Calu3 (cell line): ENCODE measurements at regions of chr1 and their contacts with region 1.

Region 1: GRCh38 chr1:25837262-25837875 is 17.6 kb downstream of the MTFR1L start:
- DNase-seq: no peak
- H3K4me3 Mint-ChIP-seq: no peak overlapping the region
- H3K27ac Mint-ChIP-seq: no peak overlapping the region
- H3K4me1 Mint-ChIP-seq: no peaks in the 10 kb centered on the region
- H3K27me3 Mint-ChIP-seq: no peaks in the 10 kb centered on the region
- CTCF ChIP-seq: no peak

Region 2: GRCh38 chr1:25704267-25704691 is 133.1 kb before region 1 on chr1:
- CTCF ChIA-PET with region 1: no interaction called
- intact Hi-C with region 1: no loop called
- DNase-seq: no peak
- H3K4me3 Mint-ChIP-seq: no peak overlapping the region
- H3K27ac Mint-ChIP-seq: no peak overlapping the region
- H3K4me1 Mint-ChIP-seq: no peaks in the 10 kb centered on the region
- H3K27me3 Mint-ChIP-seq: peaks cover 45% of the 10 kb centered on the region
- CTCF ChIP-seq: no peak

Region 3: DNA sequence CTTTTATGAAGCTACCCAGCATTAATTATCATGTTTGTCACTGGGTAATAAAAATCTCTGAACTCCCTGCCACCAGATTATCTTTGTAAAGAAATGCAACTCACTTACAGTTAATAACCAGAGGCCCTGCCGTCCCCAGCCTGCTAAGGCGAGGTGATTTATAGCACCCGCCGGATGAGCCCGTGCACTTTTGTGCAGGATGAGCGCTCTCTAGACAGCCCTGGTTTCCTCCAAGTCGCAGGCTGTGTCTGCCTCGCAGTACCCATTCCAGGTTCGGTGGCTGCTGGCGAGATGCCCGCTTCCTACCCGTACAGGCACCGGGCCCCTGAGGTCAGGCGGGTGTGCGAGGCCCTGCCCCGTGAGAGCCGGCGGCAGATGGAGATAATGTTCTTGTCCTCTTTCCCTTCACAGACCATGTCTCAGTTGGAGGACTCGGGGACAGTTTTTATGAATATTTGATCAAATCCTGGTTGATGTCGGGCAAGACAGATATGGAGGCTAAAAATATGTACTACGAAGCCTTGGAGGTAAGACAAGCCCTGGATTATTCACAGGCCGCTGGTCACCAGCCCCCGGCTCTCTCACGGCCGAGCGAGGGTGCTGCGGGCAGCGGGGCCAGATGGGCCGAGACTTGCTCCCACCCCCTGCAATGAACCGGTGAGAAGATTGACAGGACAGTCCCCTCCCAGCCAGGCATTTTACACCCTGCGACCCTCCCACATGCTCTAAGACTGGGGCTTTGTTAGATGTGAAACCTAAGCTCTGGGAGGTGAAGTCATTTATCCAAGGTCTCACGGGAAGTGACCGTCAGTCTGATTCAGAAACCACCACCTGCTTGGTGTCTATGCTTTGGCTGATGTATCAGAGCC is 65.9 kb before region 1 on chr1:
- CTCF ChIA-PET with region 1: no interaction called
- intact Hi-C with region 1: no loop called
- DNase-seq: no peak
- H3K4me3 Mint-ChIP-seq: no peak overlapping the region
- H3K27ac Mint-ChIP-seq: no peak overlapping the region
- H3K4me1 Mint-ChIP-seq: peaks cover 33% of the 10 kb centered on the region
- H3K27me3 Mint-ChIP-seq: peaks cover 47% of the 10 kb centered on the region
- CTCF ChIP-seq: no peak

Region 4: DNA sequence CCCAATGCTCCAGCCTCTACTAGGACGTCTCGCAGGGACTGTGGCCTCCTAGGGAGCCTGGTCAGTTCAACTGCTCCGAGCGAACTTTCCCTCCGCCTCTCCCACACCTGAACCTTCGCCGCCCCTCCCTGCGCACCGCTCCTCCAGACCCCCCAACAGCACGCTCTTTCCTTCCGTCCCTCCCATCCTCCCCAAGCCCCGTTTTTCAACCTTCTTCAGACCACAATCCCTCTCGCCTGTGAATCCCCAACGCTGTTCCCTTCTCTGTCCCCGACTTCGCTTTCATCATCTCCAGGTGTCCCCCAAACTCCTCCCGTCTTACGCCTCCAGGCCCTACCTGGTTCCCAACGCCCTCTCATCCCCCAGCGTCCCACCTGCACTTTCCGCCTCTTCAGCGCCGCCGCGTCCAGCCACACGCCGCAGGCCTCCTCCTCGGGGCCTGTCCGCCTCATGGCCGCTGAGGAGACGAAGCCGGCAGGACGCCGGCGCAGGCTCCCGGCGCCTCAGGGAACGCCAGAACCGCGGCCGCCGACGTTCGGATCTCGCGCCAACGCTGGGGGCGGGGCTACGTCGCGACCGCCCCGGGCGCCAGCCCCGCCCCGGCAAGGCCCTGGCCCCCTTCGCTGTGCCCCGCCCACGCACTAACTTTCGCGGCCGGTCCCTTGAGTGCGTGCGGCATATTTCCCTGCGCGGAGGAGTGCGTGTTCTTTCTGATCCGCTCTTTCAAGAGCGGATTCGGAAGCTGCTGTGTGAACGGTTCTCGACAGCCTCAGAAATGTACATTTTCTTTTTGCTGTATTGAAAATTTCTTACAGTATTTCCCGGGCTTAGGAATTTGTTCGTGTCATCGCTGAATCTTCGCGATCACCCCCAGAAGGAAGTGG is 21.8 kb after region 1 on chr1 and contains the start of gene AUNIP:
- CTCF ChIA-PET with region 1: no interaction called
- intact Hi-C with region 1: no loop called
- DNase-seq: peak; percentile 87
- H3K4me3 Mint-ChIP-seq: peak within 1 kb of the TSS; percentile 100
- H3K27ac Mint-ChIP-seq: peak within 1 kb of the TSS; percentile 83
- H3K4me1 Mint-ChIP-seq: peaks cover 18% of the 10 kb centered on the region
- H3K27me3 Mint-ChIP-seq: no peaks in the 10 kb centered on the region
- CTCF ChIP-seq: no peak
- total RNA-seq, gene AUNIP: 7.7 and 10.6 TPM in 2 replicates

Region 5: GRCh38 chr1:25874934-25875855 is 37.8 kb after region 1 on chr1 and contains the start of gene PAQR7:
- CTCF ChIA-PET with region 1: no interaction called
- intact Hi-C with region 1: no loop called
- DNase-seq: peak; percentile 74
- H3K4me3 Mint-ChIP-seq: peak within 1 kb of the TSS; percentile 80
- H3K27ac Mint-ChIP-seq: peak within 1 kb of the TSS; percentile 35
- H3K4me1 Mint-ChIP-seq: peaks cover 24% of the 10 kb centered on the region
- H3K27me3 Mint-ChIP-seq: no peaks in the 10 kb centered on the region
- CTCF ChIP-seq: no peak
- total RNA-seq, gene PAQR7: 13.6 and 15.9 TPM in 2 replicates

Region 6: GRCh38 chr1:25997828-25998761 is 160.7 kb after region 1 on chr1 and contains the start of gene PAFAH2:
- CTCF ChIA-PET with region 1: interaction called, 5 read pairs
- intact Hi-C with region 1: loop called (anchors 5 kb)
- DNase-seq: peak; percentile 91
- H3K4me3 Mint-ChIP-seq: peak within 1 kb of the TSS; percentile 92
- H3K27ac Mint-ChIP-seq: peak within 1 kb of the TSS; percentile 91
- H3K4me1 Mint-ChIP-seq: no peaks in the 10 kb centered on the region
- H3K27me3 Mint-ChIP-seq: no peaks in the 10 kb centered on the region
- CTCF ChIP-seq: peak; percentile 83
- total RNA-seq, gene PAFAH2: 8.4 and 11.5 TPM in 2 replicates